ENCODE measurements at regions of chrX and their contacts with region 1.

Region 1: DNA sequence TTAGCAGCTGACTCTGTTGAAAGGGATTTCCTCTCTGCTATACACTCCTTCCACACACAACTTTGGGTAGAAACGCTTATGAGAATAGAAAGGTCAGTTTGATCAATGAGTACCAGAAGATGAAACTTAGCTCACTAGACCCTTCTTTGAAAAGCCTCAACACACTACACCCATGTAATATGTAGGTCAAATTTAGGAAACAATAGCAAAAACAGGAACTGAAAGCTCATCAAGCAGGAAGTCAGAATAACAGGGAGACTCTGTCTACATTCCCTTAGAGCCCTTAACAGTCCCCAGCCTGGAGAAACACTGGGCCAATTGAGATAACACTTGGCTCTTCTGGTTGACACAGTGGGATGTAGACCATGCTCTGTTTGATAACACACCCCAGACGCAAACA is 30.7 kb downstream of the SRPX2 start:
- DNase-seq: no peak
- CTCF ChIP-seq: no peak

Region 2: DNA sequence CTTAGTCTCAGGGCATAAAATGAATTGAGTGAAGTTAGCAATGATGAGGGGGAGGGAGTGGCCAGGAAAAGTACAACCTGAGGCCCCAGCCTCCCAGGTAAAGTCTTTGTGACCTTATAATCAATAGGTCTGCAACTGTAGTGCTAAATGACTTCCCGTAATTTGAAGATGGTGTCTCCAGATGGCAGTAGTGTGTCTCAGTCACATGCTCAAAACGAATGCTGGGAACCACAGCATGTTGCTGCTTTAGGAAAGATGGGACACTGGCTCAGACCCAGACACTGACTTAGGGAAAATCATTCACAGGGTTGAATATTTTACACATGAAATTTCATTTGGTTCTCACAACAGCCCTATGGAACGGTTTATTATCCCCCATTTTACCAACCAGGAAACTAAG is 20.4 kb before region 1 on chrX:
- CTCF ChIA-PET with region 1: interaction called, 14 read pairs
- POLR2A ChIA-PET with region 1: no interaction called
- DNase-seq: no peak
- CTCF ChIP-seq: peak; percentile 2

Region 3: DNA sequence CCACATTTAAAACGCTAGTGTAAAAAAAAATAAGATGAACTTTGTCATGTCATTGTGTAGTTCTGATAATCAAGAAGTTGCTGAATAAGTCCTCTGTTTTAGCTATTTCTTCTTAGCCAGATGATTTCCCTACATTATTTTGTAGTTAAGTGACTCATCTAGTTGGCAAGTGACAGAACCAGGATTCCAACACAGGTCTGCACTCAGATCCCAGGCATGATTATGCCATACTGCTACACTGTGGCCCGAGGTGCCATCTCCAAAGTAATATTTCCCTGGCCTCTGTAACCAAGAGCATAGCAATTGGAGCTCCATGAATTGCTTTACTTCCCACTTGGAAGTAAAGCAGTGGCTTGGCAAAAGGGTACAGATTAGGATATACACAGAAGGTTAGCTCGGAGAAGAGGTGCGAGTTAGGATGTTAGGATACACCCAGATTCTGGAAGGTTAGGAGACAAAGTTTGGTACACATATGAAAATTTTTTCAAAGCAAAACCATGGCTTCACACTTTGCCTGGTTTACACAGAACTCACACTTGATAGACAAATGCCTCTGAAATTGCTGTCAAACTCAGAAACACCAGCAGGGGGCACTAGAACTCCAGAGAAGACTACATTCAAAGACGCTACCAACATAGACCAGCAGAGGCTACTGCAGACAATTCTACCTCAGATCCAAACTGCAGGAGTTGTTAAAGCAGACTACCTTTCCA is 10.7 kb after region 1 on chrX:
- CTCF ChIA-PET with region 1: interaction called, 12 read pairs
- POLR2A ChIA-PET with region 1: no interaction called
- DNase-seq: peak; percentile 58
- CTCF ChIP-seq: peak; percentile 50